Activated T-helper 1 cell treated with anti-CD3 and anti-CD28 coated beads, Interleukin-12 subunit alpha, Interleukin-12 subunit beta, Interleukin-2, Interleukin-4 antibody, amounts not matched to agents 30 ng/mL and 10 ng/mL and 1 ng/mL, durations not matched to agents 14 hours and 24 hours and 36 hours (primary cell): ENCODE measurements at regions of chr1 and their contacts with region 1.

Region 1: GRCh38 chr1:19596714-19597495 is 47.2 kb upstream of the NBL1 start:
- DNase-seq: peak; percentile 96
- H3K4me3 Mint-ChIP-seq: peak overlapping the region; percentile 97
- H3K27ac Mint-ChIP-seq: peak overlapping the region; percentile 100
- H3K4me1 Mint-ChIP-seq: peaks cover 42% of the 10 kb centered on the region
- H3K27me3 Mint-ChIP-seq: peaks cover 6% of the 10 kb centered on the region

Region 2: GRCh38 chr1:19251305-19252196 is 345.4 kb before region 1 on chr1 and contains the starts of genes EMC1 and MRTO4:
- intact Hi-C with region 1: loop called (anchors 1 kb)
- DNase-seq: peak; percentile 87
- H3K4me3 Mint-ChIP-seq: peak within 1 kb of the TSS; percentile 99
- H3K27ac Mint-ChIP-seq: peak within 1 kb of the TSS; percentile 98
- H3K4me1 Mint-ChIP-seq: peaks cover 22% of the 10 kb centered on the region
- H3K27me3 Mint-ChIP-seq: no peaks in the 10 kb centered on the region
- total RNA-seq, gene EMC1: 63.9 and 78.3 TPM in 2 replicates
- total RNA-seq, gene MRTO4: 134 and 137 TPM in 2 replicates

Region 3: DNA sequence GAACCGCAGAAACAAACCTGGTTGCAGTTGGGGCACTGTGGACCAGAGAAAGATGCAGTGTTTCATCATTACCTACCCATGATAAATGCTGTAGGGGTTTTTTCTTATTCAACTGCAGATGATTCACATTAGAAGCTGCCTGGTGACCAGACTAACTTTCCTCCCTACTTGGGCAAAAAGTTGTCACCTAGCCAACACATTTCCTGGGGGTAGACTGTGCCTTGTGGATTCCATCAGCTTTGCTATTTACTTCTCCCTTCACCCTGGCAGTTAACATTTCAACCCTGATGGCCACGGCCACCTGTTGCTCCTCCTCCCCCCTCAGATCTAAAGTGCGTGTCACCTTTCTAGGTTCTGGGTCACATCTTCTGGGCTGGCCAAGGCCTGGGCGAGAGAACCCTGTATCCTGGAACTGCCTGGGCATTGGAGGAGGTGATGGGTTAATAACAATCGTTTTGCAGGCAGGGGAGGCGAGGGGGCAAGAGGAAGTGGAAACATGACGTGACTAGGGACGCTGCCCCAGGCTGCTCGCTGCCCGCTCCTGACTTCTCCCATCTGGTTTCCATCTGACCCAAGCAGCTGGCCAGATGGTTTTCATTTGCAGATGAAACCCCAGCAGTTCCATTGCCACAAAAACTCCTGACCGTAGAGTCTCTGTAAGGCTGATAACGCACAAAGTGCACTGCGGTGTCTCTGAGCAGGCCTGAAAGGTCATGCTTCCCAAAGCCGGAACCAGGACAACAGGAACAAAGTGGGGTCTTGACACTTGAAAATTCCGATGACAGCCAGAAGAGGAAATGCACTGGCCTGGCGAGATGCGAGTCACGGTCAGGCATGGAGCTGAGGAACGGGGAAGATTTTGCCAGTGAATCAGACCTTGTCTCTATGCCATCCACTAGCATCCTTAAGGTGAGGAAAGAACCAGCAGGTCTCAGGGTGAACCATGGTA is 148.1 kb before region 1 on chr1:
- intact Hi-C with region 1: loop called (anchors 5 kb)
- DNase-seq: no peak
- H3K4me3 Mint-ChIP-seq: peak overlapping the region; percentile 24
- H3K27ac Mint-ChIP-seq: peak overlapping the region; percentile 91
- H3K4me1 Mint-ChIP-seq: peaks cover 84% of the 10 kb centered on the region
- H3K27me3 Mint-ChIP-seq: no peaks in the 10 kb centered on the region

Region 4: GRCh38 chr1:19606817-19607642 is 10.1 kb after region 1 on chr1:
- intact Hi-C with region 1: loop called (anchors 1 kb)
- DNase-seq: peak; percentile 46
- H3K4me3 Mint-ChIP-seq: peak overlapping the region; percentile 30
- H3K27ac Mint-ChIP-seq: peak overlapping the region; percentile 58
- H3K4me1 Mint-ChIP-seq: peaks cover 43% of the 10 kb centered on the region
- H3K27me3 Mint-ChIP-seq: no peaks in the 10 kb centered on the region

Region 5: GRCh38 chr1:19715334-19716203 is 118.7 kb after region 1 on chr1:
- intact Hi-C with region 1: loop called (anchors 2 kb)
- DNase-seq: peak; percentile 75
- H3K4me3 Mint-ChIP-seq: no peak overlapping the region
- H3K27ac Mint-ChIP-seq: no peak overlapping the region
- H3K4me1 Mint-ChIP-seq: peaks cover 17% of the 10 kb centered on the region
- H3K27me3 Mint-ChIP-seq: no peaks in the 10 kb centered on the region